CD8-positive, alpha-beta T cell (primary cell): ENCODE measurements at regions of chr18 and their contacts with region 1.

Region 1: DNA sequence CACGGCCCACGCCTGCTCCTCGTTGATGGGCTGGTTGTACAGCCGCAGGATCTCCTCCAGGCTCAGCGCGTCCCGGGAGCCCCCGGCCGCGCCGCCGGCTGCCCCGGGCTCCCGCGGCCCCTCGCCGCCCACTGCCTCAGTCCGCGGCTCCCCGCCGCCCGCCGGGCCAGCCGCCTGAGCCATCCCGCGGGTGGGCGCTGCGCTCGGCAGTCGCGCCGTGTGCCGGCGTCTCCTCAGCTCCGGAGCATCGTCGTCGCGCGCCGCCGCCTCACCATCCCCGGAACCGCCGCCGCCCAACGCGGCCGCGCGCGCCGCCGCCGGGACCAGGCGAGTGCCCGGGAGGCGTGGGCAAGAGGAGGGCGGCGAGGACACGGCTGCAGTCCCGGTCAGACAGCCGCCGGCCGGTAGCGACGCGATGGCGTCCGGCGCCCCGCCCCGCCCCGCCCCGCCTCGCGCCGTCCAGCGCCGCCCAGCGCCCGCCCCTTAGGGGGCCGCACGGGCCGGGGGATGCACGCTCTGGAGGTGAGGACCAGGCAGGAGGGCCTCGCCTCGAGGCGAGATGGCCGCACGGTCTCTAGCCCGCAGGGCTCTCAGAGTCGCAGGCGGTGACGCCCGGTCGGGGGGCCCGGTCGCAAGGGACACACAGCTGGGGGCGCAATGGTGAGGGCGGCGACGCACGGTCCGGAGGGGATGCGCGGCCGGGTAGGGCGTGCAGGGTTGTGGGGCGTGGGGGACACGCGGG is at the start of gene SPIRE1:
- DNase-seq: peak in 8 of 9 experiments; percentile 12 to 69 (median 32)
- ATAC-seq: peak; percentile 54
- H3K4me3 ChIP-seq: peak within 1 kb of the TSS; percentile 43 to 45
- H3K4me3 Mint-ChIP-seq: peak within 1 kb of the TSS; percentile 88
- H3K27ac ChIP-seq: no peak within 1 kb of the TSS
- H3K27ac Mint-ChIP-seq: no peak within 1 kb of the TSS
- H3K4me1 ChIP-seq: peaks cover 9% of the 10 kb centered on the region
- H3K4me1 Mint-ChIP-seq: peaks cover 12% of the 10 kb centered on the region
- H3K27me3 ChIP-seq: no peaks in the 10 kb centered on the region
- H3K27me3 Mint-ChIP-seq: peaks cover 11% of the 10 kb centered on the region
- CTCF ChIP-seq: no peak
- total RNA-seq, gene SPIRE1: 0.57 to 0.69 TPM

Region 2: DNA sequence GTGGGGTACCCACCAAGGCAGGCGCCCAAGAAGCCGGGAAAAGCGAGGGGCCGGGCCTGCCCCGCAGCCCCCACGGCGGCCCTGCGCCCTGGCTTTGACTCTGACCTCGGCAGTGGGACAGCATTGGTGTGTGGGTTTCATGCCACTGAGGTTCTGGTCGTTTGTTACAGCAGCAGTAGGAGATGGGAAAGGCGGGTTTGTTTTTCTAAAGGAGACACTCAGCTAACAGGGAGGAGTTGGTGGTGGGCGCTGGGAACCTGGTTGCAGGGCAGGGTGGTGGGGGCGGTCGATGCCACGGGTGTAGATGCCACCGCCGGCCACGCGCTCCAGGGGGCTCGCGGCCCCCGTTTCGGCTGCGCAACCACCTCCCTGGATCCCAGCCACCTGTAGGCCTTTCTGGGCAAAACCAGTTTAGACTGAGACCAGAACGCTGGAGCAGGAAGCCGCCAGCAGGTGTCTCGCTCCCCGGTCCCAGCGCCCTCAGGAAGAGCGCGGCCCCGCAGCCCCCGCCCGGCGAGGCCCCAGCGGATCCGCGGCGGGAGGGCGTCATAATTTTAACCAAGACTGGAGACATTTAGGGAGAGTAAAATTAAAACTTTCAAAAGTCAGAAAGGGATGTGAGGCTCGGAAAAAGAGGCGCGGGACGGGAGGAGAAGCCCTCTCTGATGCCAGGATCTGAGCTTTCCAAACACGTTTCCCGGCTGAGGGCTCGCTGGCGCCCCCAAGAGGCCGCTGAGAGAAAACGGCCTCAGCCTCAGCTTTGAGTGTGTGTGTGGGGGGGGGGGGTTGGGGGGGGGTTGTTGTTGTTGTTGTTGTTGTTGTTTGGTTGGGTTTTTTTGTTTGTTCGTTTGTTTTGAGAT is 386.2 kb before region 1 on chr18:
- CTCF ChIA-PET with region 1: no interaction called
- POLR2A ChIA-PET with region 1: no interaction called
- intact Hi-C with region 1: loop called in 1 of 2 experiments (anchors 5 kb)
- DNase-seq: peak in 8 of 9 experiments; percentile 2 to 64 (median 28)
- ATAC-seq: peak; percentile 70
- H3K4me3 ChIP-seq: peak overlapping the region; percentile 17 to 44
- H3K4me3 Mint-ChIP-seq: peak overlapping the region; percentile 66
- H3K27ac ChIP-seq: no peak overlapping the region
- H3K27ac Mint-ChIP-seq: no peak overlapping the region
- H3K4me1 ChIP-seq: no peaks in the 10 kb centered on the region
- H3K4me1 Mint-ChIP-seq: peaks cover 5% of the 10 kb centered on the region
- H3K27me3 ChIP-seq: no peaks in the 10 kb centered on the region
- H3K27me3 Mint-ChIP-seq: peaks cover 14% of the 10 kb centered on the region
- CTCF ChIP-seq: peak; percentile 48

Region 3: DNA sequence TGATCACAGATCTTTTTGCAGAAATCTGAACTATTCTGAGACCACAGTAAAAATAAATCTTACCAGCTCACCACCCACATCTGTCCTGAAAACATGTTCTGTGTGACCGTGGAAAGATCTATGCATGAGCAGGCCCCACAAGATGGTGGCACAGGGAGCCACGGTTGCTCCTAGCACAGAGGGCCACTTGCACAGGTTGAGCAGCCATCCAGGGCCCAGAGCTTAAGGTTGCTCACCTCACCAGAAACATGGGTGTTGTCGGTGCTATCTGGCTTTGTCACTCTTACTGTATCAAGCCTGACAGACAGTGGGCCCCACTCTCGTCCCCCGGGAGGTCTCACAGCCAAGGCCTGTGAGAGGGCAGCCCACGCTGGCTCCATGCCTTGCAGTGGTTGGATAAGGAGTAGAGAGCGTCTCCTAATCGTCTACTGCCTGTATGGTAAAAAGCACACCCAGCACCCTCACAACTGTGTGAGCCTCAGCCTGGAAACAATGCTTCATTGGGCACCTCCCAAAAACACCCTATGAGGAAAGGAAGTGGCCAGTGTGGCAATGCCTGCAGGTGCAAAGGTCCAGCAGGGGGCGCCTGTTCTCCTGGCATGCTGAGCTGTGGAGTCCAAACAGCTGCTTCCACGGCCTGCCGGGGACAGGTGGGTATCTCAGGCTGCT is 330.2 kb before region 1 on chr18:
- CTCF ChIA-PET with region 1: interaction called, 15 read pairs
- POLR2A ChIA-PET with region 1: no interaction called
- intact Hi-C with region 1: loop called (anchors 1 kb)
- DNase-seq: peak; percentile 47 to 80 (median 66)
- ATAC-seq: peak; percentile 66
- H3K4me3 ChIP-seq: no peak overlapping the region
- H3K4me3 Mint-ChIP-seq: no peak overlapping the region
- H3K27ac ChIP-seq: no peak overlapping the region
- H3K27ac Mint-ChIP-seq: no peak overlapping the region
- H3K4me1 ChIP-seq: no peaks in the 10 kb centered on the region
- H3K4me1 Mint-ChIP-seq: peaks cover 4% of the 10 kb centered on the region
- H3K27me3 ChIP-seq: no peaks in the 10 kb centered on the region
- H3K27me3 Mint-ChIP-seq: no peaks in the 10 kb centered on the region
- CTCF ChIP-seq: peak; percentile 76

Region 4: GRCh38 chr18:12391618-12392165 is 266.2 kb before region 1 on chr18:
- CTCF ChIA-PET with region 1: interaction called, 59 read pairs
- POLR2A ChIA-PET with region 1: no interaction called
- intact Hi-C with region 1: loop called (anchors 1 kb)
- DNase-seq: peak in 8 of 9 experiments; percentile 28 to 74 (median 56)
- ATAC-seq: peak; percentile 99
- H3K4me3 ChIP-seq: no peak overlapping the region
- H3K4me3 Mint-ChIP-seq: no peak overlapping the region
- H3K27ac ChIP-seq: no peak overlapping the region
- H3K27ac Mint-ChIP-seq: no peak overlapping the region
- H3K4me1 ChIP-seq: no peaks in the 10 kb centered on the region
- H3K4me1 Mint-ChIP-seq: no peaks in the 10 kb centered on the region
- H3K27me3 ChIP-seq: no peaks in the 10 kb centered on the region
- H3K27me3 Mint-ChIP-seq: peaks cover 15% of the 10 kb centered on the region
- CTCF ChIP-seq: peak; percentile 78

Region 5: GRCh38 chr18:12408247-12408869 is 249.5 kb before region 1 on chr18:
- CTCF ChIA-PET with region 1: interaction called, 7 read pairs
- POLR2A ChIA-PET with region 1: no interaction called
- intact Hi-C with region 1: loop called in 1 of 2 experiments (anchors 5 kb)
- DNase-seq: peak in 3 of 9 experiments; percentile 31 to 52 (median 42)
- ATAC-seq: peak; percentile 9
- H3K4me3 ChIP-seq: peak overlapping the region in 1 of 2 experiments; percentile 71
- H3K4me3 Mint-ChIP-seq: peak overlapping the region; percentile 72
- H3K27ac ChIP-seq: no peak overlapping the region
- H3K27ac Mint-ChIP-seq: peak overlapping the region; percentile 30
- H3K4me1 ChIP-seq: peaks cover 18% of the 10 kb centered on the region
- H3K4me1 Mint-ChIP-seq: peaks cover 21% of the 10 kb centered on the region
- H3K27me3 ChIP-seq: no peaks in the 10 kb centered on the region
- H3K27me3 Mint-ChIP-seq: peaks cover 10% of the 10 kb centered on the region
- CTCF ChIP-seq: no peak